CD4-positive, alpha-beta memory T cell (primary cell): ENCODE measurements at regions of chr5 and their contacts with region 1.

Region 1: GRCh38 chr5:176543428-176544173 is 5.5 kb upstream of the CDHR2 start:
- DNase-seq: peak; percentile 75 to 79 (median 78)
- H3K4me3 ChIP-seq: peak overlapping the region; percentile 65 to 69
- H3K4me3 Mint-ChIP-seq: peak overlapping the region; percentile 89 to 95 (median 92)
- H3K27ac ChIP-seq: peak overlapping the region; percentile 83
- H3K27ac Mint-ChIP-seq: peak overlapping the region; percentile 89 to 97 (median 96)
- H3K4me1 ChIP-seq: peaks cover 69% of the 10 kb centered on the region
- H3K4me1 Mint-ChIP-seq: peaks cover 45 to 82% (median 57%) of the 10 kb centered on the region in 4 donors
- H3K27me3 ChIP-seq: no peaks in the 10 kb centered on the region
- H3K27me3 Mint-ChIP-seq: no peaks in the 10 kb centered on the region

Region 2: GRCh38 chr5:176361437-176362232 is 182.0 kb before region 1 on chr5 and contains the start of gene KIAA1191:
- CTCF ChIA-PET with region 1: no interaction called
- POLR2A ChIA-PET with region 1: interaction called, 22 read pairs
- intact Hi-C with region 1: no loop called
- DNase-seq: peak; percentile 93 to 97 (median 94)
- H3K4me3 ChIP-seq: peak within 1 kb of the TSS; percentile 91 to 97
- H3K4me3 Mint-ChIP-seq: peak within 1 kb of the TSS; percentile 97 to 99 (median 98)
- H3K27ac ChIP-seq: peak within 1 kb of the TSS; percentile 78
- H3K27ac Mint-ChIP-seq: peak within 1 kb of the TSS; percentile 92 to 98 (median 97)
- H3K4me1 ChIP-seq: peaks cover 39% of the 10 kb centered on the region
- H3K4me1 Mint-ChIP-seq: peaks cover 27 to 57% (median 42%) of the 10 kb centered on the region in 4 donors
- H3K27me3 ChIP-seq: no peaks in the 10 kb centered on the region
- H3K27me3 Mint-ChIP-seq: no peaks in the 10 kb centered on the region
- total RNA-seq, gene KIAA1191: 73.3 to 76.6 TPM

Region 3: DNA sequence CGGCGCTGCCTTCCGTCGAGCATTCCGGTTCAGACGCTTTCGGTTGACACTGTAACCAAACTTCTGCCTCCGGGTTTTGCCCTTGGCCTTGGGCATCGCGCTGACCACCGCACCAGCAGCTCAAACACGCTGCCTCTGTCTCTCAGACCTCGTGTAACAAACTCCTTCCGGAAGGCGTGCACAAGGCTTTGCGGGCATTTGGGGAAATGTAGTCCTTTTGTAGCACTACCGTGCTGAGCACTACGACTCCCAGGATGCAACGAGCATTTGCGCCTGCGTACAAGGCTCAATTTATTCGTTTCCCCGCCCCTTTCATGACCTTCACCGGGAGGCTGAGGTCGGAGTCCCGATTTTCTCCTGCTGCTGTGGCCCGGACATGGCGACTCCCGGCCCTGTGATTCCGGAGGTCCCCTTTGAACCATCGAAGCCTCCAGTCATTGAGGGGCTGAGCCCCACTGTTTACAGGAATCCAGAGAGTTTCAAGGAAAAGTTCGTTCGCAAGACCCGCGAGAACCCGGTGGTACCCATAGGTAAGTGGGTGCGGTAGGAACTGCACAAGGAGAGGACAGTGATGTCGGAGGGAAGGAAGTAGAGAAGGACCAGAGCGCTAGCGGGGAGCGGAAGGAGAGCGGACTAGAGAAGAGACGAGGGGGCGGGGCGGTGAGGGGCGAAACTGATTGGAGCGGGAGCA is 155.0 kb before region 1 on chr5 and contains the starts of genes HIGD2A and NOP16:
- CTCF ChIA-PET with region 1: interaction called, 3 read pairs
- POLR2A ChIA-PET with region 1: interaction called, 11 read pairs
- intact Hi-C with region 1: no loop called
- DNase-seq: peak; percentile 98 to 100 (median 99)
- H3K4me3 ChIP-seq: peak within 1 kb of the TSS; percentile 90 to 99
- H3K4me3 Mint-ChIP-seq: peak within 1 kb of the TSS; percentile 95 to 100 (median 97)
- H3K27ac ChIP-seq: peak within 1 kb of the TSS; percentile 91
- H3K27ac Mint-ChIP-seq: peak within 1 kb of the TSS; percentile 96 to 100 (median 100)
- H3K4me1 ChIP-seq: peaks cover 33% of the 10 kb centered on the region
- H3K4me1 Mint-ChIP-seq: peaks cover 17 to 45% (median 30%) of the 10 kb centered on the region in 4 donors
- H3K27me3 ChIP-seq: no peaks in the 10 kb centered on the region
- H3K27me3 Mint-ChIP-seq: no peaks in the 10 kb centered on the region
- total RNA-seq, gene HIGD2A: 81.3 to 83.4 TPM
- total RNA-seq, gene NOP16: 16.9 to 19.4 TPM

Region 4: DNA sequence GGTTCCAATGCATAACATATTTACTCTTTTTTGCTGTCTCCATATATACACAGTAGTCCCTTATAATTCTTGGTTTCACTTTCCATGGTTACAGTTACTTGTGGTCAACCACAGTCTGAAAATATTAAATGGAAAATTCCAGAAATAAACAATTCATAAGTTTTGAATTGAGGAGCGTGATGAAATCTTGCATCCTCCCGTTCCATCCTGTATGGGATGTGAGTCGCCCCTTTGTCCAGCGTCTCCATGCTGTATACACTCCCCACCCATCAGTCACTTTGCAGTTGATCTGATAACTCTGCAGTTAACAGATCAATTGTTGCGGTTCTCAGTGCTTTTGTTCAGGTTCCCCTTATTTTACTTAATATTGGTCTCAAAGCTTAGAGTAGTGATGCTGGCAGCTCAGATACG is 106.9 kb before region 1 on chr5:
- CTCF ChIA-PET with region 1: no interaction called
- POLR2A ChIA-PET with region 1: no interaction called
- intact Hi-C with region 1: no loop called
- DNase-seq: peak in 1 of 5 donors; percentile 45
- H3K4me3 ChIP-seq: no peak overlapping the region
- H3K4me3 Mint-ChIP-seq: peak overlapping the region; percentile 62 to 88 (median 77)
- H3K27ac ChIP-seq: no peak overlapping the region
- H3K27ac Mint-ChIP-seq: peak overlapping the region in 6 of 7 donors; percentile 2 to 88 (median 46)
- H3K4me1 ChIP-seq: peaks cover 7% of the 10 kb centered on the region
- H3K4me1 Mint-ChIP-seq: peaks cover 7 to 16% (median 9%) of the 10 kb centered on the region in 4 donors
- H3K27me3 ChIP-seq: no peaks in the 10 kb centered on the region
- H3K27me3 Mint-ChIP-seq: peaks cover 3 to 5% of the 10 kb centered on the region in 2 donors

Region 5: DNA sequence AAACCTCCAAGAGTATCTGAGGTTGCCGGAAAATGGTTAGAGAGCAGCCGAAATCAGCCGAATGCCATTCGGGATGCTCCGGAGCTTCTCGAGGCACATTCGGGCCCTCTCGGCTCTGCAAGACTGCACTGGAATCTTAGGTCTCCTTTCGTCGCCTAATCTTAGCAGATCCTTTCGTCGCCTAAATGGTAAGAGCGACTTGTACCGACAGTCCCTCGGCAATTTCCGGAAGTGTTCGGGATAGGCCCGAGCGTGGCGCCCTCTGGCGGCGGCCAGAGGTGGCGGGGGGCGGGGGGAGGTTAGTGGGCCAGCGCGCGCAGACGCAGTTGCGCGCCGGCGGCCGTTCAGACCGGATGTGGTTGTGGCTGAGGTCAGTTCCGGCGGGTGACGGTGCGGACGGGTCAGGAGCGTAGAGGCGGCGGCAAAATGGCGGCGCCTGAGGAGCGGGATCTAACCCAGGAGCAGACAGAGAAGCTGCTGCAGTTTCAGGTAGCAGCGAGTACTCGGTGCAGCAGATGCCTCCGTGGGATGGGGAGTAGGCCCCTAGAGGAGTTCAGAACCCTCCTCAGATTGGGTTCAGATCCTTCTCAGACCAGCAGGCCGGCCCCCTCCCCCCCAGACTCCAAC is 95.5 kb before region 1 on chr5 and contains the start of gene FAF2:
- CTCF ChIA-PET with region 1: interaction called, 25 read pairs
- POLR2A ChIA-PET with region 1: interaction called, 98 read pairs
- intact Hi-C with region 1: loop called (anchors 1 kb)
- DNase-seq: peak; percentile 97 to 100 (median 99)
- H3K4me3 ChIP-seq: peak within 1 kb of the TSS; percentile 95 to 100
- H3K4me3 Mint-ChIP-seq: peak within 1 kb of the TSS; percentile 97 to 100 (median 98)
- H3K27ac ChIP-seq: peak within 1 kb of the TSS; percentile 98
- H3K27ac Mint-ChIP-seq: peak within 1 kb of the TSS; percentile 98 to 100 (median 99)
- H3K4me1 ChIP-seq: peaks cover 42% of the 10 kb centered on the region
- H3K4me1 Mint-ChIP-seq: peaks cover 21 to 51% (median 36%) of the 10 kb centered on the region in 4 donors
- H3K27me3 ChIP-seq: no peaks in the 10 kb centered on the region
- H3K27me3 Mint-ChIP-seq: peaks cover 0 to 2% of the 10 kb centered on the region in 2 donors
- total RNA-seq, gene FAF2: 32.3 to 33.6 TPM

Region 6: DNA sequence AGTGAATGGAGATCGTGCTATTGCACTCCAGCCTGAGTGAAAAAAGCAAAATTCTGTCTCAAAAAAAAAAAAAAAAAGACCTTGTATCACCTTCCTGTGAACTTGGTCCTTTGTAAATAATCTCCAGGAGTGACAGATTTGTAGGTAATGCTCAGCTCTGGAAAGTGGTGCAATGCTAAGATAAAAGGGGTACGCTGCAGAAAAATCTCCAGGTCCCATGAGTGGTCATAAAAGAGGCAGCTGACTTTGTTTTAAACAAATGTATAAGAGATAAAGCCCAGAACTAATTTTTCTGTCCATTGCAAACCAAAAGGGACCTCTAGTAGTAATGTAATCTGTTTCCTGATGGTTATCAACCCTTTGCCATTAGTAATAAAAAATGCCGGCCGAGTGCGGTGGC is 40.1 kb before region 1 on chr5:
- CTCF ChIA-PET with region 1: no interaction called
- POLR2A ChIA-PET with region 1: no interaction called
- intact Hi-C with region 1: no loop called
- DNase-seq: no peak
- H3K4me3 ChIP-seq: no peak overlapping the region
- H3K4me3 Mint-ChIP-seq: no peak overlapping the region
- H3K27ac ChIP-seq: no peak overlapping the region
- H3K27ac Mint-ChIP-seq: peak overlapping the region in 2 of 7 donors; percentile 41 to 53
- H3K4me1 ChIP-seq: no peaks in the 10 kb centered on the region
- H3K4me1 Mint-ChIP-seq: peaks cover 0 to 3% (median 0%) of the 10 kb centered on the region in 4 donors
- H3K27me3 ChIP-seq: no peaks in the 10 kb centered on the region
- H3K27me3 Mint-ChIP-seq: no peaks in the 10 kb centered on the region

Region 7: GRCh38 chr5:176530983-176531821 is 12.4 kb before region 1 on chr5:
- CTCF ChIA-PET with region 1: interaction called, 40 read pairs
- POLR2A ChIA-PET with region 1: interaction called, 533 read pairs
- intact Hi-C with region 1: loop called (anchors 1 kb)
- DNase-seq: peak in 2 of 5 donors; percentile 15 to 41
- H3K4me3 ChIP-seq: peak overlapping the region; percentile 15 to 20
- H3K4me3 Mint-ChIP-seq: peak overlapping the region; percentile 71 to 92 (median 80)
- H3K27ac ChIP-seq: peak overlapping the region; percentile 40
- H3K27ac Mint-ChIP-seq: peak overlapping the region; percentile 61 to 93 (median 86)
- H3K4me1 ChIP-seq: peaks cover 75% of the 10 kb centered on the region
- H3K4me1 Mint-ChIP-seq: peaks cover 26 to 62% (median 43%) of the 10 kb centered on the region in 4 donors
- H3K27me3 ChIP-seq: no peaks in the 10 kb centered on the region
- H3K27me3 Mint-ChIP-seq: no peaks in the 10 kb centered on the region

Region 8: DNA sequence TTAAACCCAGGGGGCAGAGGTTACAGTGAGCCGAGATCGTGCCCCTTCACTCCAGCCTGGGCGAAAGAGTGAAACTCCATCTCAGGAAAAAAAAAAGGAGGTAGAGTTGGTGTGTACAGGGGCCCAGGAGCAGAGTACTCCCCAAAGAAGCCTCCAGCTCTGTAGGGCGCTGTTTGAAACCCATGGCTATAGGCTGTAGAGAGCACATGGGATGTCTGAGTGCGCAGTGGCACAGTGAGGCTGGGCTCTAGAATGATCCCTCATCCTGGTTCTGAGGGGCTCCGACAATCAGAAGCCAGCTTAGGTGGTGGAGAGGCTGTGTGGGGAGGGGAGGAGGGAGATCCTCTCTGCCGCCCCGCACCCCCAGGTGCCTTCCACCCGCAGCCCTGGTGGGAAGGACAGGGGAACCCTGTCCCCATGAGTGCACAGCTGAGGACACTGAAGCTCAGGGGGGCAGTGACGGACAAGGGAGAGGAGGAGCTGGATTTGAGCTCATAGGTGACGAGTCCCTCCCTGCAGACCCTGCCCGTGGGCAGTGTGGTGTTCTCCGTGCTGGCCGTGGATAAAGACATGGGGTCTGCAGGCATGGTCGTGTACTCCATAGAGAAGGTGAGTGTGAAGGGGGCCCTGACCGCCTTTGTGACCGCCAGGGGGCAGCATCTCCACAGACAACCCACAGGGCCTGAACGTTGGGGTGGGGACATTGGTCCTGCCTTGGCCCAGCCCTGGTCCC is 30.1 kb after region 1 on chr5:
- CTCF ChIA-PET with region 1: interaction called, 27 read pairs
- POLR2A ChIA-PET with region 1: interaction called, 23 read pairs
- intact Hi-C with region 1: loop called (anchors 1 kb)
- DNase-seq: peak; percentile 62 to 71 (median 67)
- H3K4me3 ChIP-seq: no peak overlapping the region
- H3K4me3 Mint-ChIP-seq: no peak overlapping the region
- H3K27ac ChIP-seq: no peak overlapping the region
- H3K27ac Mint-ChIP-seq: no peak overlapping the region
- H3K4me1 ChIP-seq: peaks cover 6% of the 10 kb centered on the region
- H3K4me1 Mint-ChIP-seq: peaks cover 4 to 16% (median 8%) of the 10 kb centered on the region in 4 donors
- H3K27me3 ChIP-seq: no peaks in the 10 kb centered on the region
- H3K27me3 Mint-ChIP-seq: peaks cover 3 to 9% of the 10 kb centered on the region in 2 donors

Region 9: GRCh38 chr5:176700239-176700847 is 156.7 kb after region 1 on chr5:
- CTCF ChIA-PET with region 1: no interaction called
- POLR2A ChIA-PET with region 1: no interaction called
- intact Hi-C with region 1: no loop called
- DNase-seq: no peak
- H3K4me3 ChIP-seq: no peak overlapping the region
- H3K4me3 Mint-ChIP-seq: no peak overlapping the region
- H3K27ac ChIP-seq: no peak overlapping the region
- H3K27ac Mint-ChIP-seq: no peak overlapping the region
- H3K4me1 ChIP-seq: no peaks in the 10 kb centered on the region
- H3K4me1 Mint-ChIP-seq: peaks cover 0 to 1% (median 0%) of the 10 kb centered on the region in 4 donors
- H3K27me3 ChIP-seq: peaks cover 4% of the 10 kb centered on the region
- H3K27me3 Mint-ChIP-seq: peaks cover 36 to 57% of the 10 kb centered on the region in 2 donors